ENCODE measurements at regions of chr1 and their contacts with region 1.

Region 1: GRCh38 chr1:16078925-16079656 is 5.6 kb upstream of the FAM131C start:
- DNase-seq: peak; percentile 76
- H3K4me3 ChIP-seq: no peak overlapping the region
- H3K27ac ChIP-seq: no peak overlapping the region
- H3K4me1 ChIP-seq: peaks cover 6% of the 10 kb centered on the region
- H3K27me3 ChIP-seq: no peaks in the 10 kb centered on the region
- CTCF ChIP-seq: peak; percentile 92 to 93
- POLR2A ChIP-seq: no peak

Region 2: DNA sequence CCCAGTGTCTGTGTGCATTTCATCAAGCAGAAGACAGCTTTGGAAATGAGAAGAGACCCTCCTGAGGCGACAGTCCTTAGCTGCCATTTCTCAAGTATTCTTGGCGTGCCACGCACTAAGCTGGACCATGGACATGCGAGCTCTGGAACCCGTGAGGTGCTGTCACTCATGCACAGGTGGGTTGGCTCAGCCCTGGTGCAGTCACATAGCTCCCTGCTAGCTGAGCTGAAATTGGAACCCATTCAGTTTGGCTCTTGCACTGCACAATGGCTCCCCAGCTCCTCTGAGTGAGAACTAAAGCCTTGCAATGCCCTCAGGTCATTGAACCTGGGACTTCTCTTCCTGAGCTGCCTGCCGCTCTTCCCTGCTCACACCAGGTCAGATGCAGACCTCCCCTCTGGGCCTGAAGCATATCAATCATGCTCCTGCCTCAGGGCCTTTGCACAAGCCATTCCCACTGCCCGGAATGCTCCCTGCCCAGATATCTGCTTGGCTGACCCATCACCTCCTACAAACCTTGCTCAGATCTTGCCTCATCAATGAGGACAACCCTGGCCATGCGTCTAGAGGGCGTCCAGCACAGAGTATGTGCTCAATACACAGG is 81.4 kb before region 1 on chr1:
- CTCF ChIA-PET with region 1: no interaction called
- POLR2A ChIA-PET with region 1: no interaction called
- dilution Hi-C with region 1: no loop called
- intact Hi-C with region 1: no loop called
- DNase-seq: no peak
- H3K4me3 ChIP-seq: no peak overlapping the region
- H3K27ac ChIP-seq: no peak overlapping the region
- H3K4me1 ChIP-seq: no peaks in the 10 kb centered on the region
- H3K27me3 ChIP-seq: peaks cover 0 to 2% of the 10 kb centered on the region in 2 experiments
- CTCF ChIP-seq: no peak
- POLR2A ChIP-seq: no peak

Region 3: DNA sequence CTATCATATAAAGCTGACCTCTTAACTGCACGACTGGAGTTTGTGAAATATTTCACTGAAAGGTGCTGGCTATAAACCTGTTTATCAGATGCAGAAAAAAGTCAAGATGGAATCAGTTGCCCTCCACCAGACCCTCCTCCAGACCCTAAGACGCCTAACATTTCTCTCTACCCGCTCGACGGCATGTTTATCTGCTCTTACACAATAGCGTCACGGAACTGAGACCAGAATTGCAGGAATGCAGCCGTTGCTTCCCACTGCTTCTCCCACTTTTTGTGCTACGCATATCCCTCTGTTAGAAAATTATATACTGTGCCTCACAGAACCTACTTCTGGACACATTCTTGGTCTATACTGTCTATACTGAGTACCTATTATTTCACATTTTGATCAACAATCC is 22.5 kb after region 1 on chr1:
- CTCF ChIA-PET with region 1: interaction called, 17 read pairs
- POLR2A ChIA-PET with region 1: no interaction called
- dilution Hi-C with region 1: no loop called
- intact Hi-C with region 1: no loop called
- DNase-seq: no peak
- H3K4me3 ChIP-seq: no peak overlapping the region
- H3K27ac ChIP-seq: no peak overlapping the region
- H3K4me1 ChIP-seq: no peaks in the 10 kb centered on the region
- H3K27me3 ChIP-seq: peaks cover 0 to 6% of the 10 kb centered on the region in 2 experiments
- CTCF ChIP-seq: no peak
- POLR2A ChIP-seq: no peak

Region 4: DNA sequence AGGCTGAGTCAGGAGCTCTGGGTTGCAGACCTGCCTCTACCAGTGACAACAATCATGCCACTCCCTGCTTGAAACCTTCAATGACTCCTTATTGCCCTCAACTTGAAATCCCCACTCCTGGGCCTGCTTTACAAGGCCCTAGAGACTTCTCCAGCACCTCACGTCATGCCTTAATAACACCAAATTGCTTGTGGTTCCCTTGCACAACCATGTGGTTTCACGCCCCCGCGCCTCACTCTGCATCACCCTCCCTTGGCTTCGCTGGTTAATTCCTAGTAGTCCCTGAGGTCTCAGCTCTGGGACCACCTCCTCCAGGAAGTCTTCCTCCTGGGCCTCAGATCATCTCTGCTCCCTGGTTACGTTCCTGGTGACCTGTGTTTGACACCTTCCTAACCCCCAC is 43.8 kb after region 1 on chr1:
- CTCF ChIA-PET with region 1: interaction called, 67 read pairs
- POLR2A ChIA-PET with region 1: no interaction called
- dilution Hi-C with region 1: no loop called
- intact Hi-C with region 1: no loop called
- DNase-seq: no peak
- H3K4me3 ChIP-seq: no peak overlapping the region
- H3K27ac ChIP-seq: no peak overlapping the region
- H3K4me1 ChIP-seq: no peaks in the 10 kb centered on the region
- H3K27me3 ChIP-seq: no peaks in the 10 kb centered on the region
- CTCF ChIP-seq: no peak
- POLR2A ChIP-seq: no peak

Region 5: GRCh38 chr1:16146279-16147155 is 67.4 kb after region 1 on chr1:
- CTCF ChIA-PET with region 1: interaction called, 154 read pairs
- POLR2A ChIA-PET with region 1: interaction called, 3 read pairs
- dilution Hi-C with region 1: no loop called
- intact Hi-C with region 1: loop called (anchors 2 kb)
- DNase-seq: peak; percentile 93
- H3K4me3 ChIP-seq: peak overlapping the region in 2 of 3 experiments; percentile 14 to 23
- H3K27ac ChIP-seq: peak overlapping the region; percentile 99
- H3K4me1 ChIP-seq: peaks cover 97% of the 10 kb centered on the region
- H3K27me3 ChIP-seq: no peaks in the 10 kb centered on the region
- CTCF ChIP-seq: no peak
- POLR2A ChIP-seq: peak; percentile 55

Region 6: DNA sequence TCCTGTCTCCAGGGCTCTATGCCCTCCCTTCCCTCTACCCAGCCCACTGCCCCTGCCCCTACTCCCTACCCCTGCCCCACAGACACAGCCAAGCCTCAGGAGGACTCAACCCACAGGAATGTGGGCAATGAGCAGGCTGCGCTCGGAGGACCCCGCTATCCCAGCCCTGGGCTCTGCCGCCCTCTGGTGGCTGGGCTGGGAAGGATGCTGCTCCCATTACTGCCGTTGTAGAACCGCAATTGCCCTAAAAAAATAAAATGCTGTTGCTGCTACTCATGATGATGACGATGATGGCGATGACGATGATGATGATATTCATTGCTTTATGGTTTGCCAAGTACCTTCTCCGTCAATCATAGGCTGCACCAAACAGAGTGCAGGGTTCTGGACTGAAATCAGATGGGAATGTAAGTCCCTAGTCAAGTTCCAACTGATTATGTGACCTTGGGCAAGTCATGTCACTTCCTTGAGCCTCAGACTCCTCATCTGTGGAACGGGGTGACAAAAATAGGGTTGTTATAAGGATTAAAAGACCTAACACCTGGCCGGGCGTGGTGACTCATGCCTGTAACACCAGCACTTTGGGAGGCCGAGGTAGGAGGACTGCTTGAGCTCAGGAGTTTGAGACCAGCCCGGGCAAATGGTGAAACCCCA is 108.8 kb after region 1 on chr1:
- CTCF ChIA-PET with region 1: interaction called, 353 read pairs
- POLR2A ChIA-PET with region 1: interaction called, 5 read pairs
- dilution Hi-C with region 1: no loop called
- intact Hi-C with region 1: loop called (anchors 1 kb)
- DNase-seq: peak; percentile 85
- H3K4me3 ChIP-seq: no peak overlapping the region
- H3K27ac ChIP-seq: no peak overlapping the region
- H3K4me1 ChIP-seq: peaks cover 5% of the 10 kb centered on the region
- H3K27me3 ChIP-seq: no peaks in the 10 kb centered on the region
- CTCF ChIP-seq: peak; percentile 93 to 95
- POLR2A ChIP-seq: no peak

Region 7: DNA sequence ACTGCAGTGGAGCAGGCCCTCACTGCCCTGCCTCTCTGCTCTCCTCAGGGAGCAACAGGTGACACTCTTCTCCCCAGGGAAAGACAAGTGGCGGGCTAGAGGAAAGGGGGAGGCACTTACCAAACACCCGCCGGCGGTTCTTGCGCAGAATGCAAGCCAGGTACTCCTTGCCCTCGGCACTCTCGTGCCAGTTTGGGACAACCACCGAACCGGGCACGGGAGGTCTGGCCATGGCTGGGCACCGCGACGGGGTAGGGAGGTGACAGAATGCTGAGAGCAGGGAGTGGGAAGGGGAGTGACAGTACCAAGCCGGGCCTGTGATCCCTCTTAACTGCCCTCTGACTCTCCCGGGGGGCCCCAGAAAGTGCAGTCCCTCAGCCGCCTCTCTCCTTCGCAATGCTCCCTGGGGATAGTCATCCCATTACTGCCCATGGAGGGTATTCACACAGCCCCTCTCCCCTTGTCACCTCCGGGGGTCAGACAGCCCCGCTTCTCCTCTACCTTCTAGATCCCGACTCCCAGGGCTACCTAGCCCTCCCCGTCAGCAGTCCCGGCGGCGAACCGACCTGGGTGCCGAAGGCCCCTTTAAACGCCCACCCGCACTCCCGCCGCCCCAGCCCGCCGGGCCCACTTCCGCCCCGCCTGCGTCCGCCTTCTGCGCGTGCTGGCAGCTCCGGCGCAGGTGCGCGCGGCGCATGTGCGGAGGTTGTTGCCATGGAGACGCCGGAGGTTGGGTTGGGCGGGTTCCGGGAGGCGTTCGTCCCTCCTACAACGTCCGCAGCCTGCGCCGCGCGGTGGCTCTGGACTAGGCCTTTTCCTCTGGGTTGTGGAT is 157.6 kb after region 1 on chr1 and contains the start of gene CPLANE2:
- CTCF ChIA-PET with region 1: interaction called, 179 read pairs
- POLR2A ChIA-PET with region 1: no interaction called
- dilution Hi-C with region 1: no loop called
- intact Hi-C with region 1: loop called (anchors 2 kb)
- DNase-seq: peak; percentile 89
- H3K4me3 ChIP-seq: peak within 1 kb of the TSS; percentile 2 to 53 (median 47)
- H3K27ac ChIP-seq: peak within 1 kb of the TSS; percentile 63
- H3K4me1 ChIP-seq: peaks cover 15% of the 10 kb centered on the region
- H3K27me3 ChIP-seq: no peaks in the 10 kb centered on the region
- CTCF ChIP-seq: no peak
- POLR2A ChIP-seq: peak; percentile 73
- total RNA-seq, gene CPLANE2: 3.7 and 3.9 TPM in 2 replicates